KBM-7 (cell line): ENCODE measurements at regions of chr5 and their contacts with region 1.

Region 1: GRCh38 chr5:55159763-55160492 is at the start of gene GPX8:
- DNase-seq: peak; percentile 52

Region 2: GRCh38 chr5:54905943-54906537 is 253.9 kb before region 1 on chr5:
- in situ Hi-C with region 1: loop called (anchors 10 kb)
- DNase-seq: peak; percentile 63